ENCODE measurements at regions of chr2 and their contacts with region 1.

Region 1: GRCh38 chr2:199985625-199986207 is 30.3 kb downstream of the MAIP1 start:
- DNase-seq: peak; percentile 67 to 84 (median 71)
- H3K4me3 ChIP-seq: no peak overlapping the region
- H3K27ac ChIP-seq: no peak overlapping the region
- H3K4me1 ChIP-seq: no peaks in the 10 kb centered on the region
- H3K27me3 ChIP-seq: no peaks in the 10 kb centered on the region
- CTCF ChIP-seq: peak; percentile 48 to 65 (median 57)
- POLR2A ChIP-seq: no peak

Region 2: GRCh38 chr2:200471324-200471848 is 485.7 kb after region 1 on chr2:
- intact Hi-C with region 1: loop called (anchors 5 kb)
- DNase-seq: no peak
- H3K4me3 ChIP-seq: no peak overlapping the region
- H3K27ac ChIP-seq: no peak overlapping the region
- H3K4me1 ChIP-seq: peaks cover 0 to 12% of the 10 kb centered on the region in 2 donors
- H3K27me3 ChIP-seq: no peaks in the 10 kb centered on the region
- CTCF ChIP-seq: peak in 5 of 6 experiments; percentile 39 to 74 (median 57)
- POLR2A ChIP-seq: no peak